ENCODE measurements at regions of chr14 and their contacts with region 1.

Region 1: GRCh38 chr14:106141242-106142220 is 615.1 kb downstream of the TMEM121 start:
- DNase-seq: peak; percentile 55
- H3K4me3 Mint-ChIP-seq: no peak overlapping the region
- H3K27ac Mint-ChIP-seq: no peak overlapping the region
- H3K4me1 Mint-ChIP-seq: peaks cover 11% of the 10 kb centered on the region
- H3K27me3 Mint-ChIP-seq: peaks cover 24% of the 10 kb centered on the region

Region 2: GRCh38 chr14:106044949-106045600 is 96.5 kb before region 1 on chr14:
- CTCF ChIA-PET with region 1: no interaction called
- DNase-seq: peak; percentile 91
- H3K4me3 Mint-ChIP-seq: no peak overlapping the region
- H3K27ac Mint-ChIP-seq: no peak overlapping the region
- H3K4me1 Mint-ChIP-seq: no peaks in the 10 kb centered on the region
- H3K27me3 Mint-ChIP-seq: peaks cover 16% of the 10 kb centered on the region

Region 3: GRCh38 chr14:106055289-106055688 is 86.2 kb before region 1 on chr14:
- CTCF ChIA-PET with region 1: no interaction called
- DNase-seq: no peak
- H3K4me3 Mint-ChIP-seq: no peak overlapping the region
- H3K27ac Mint-ChIP-seq: no peak overlapping the region
- H3K4me1 Mint-ChIP-seq: peaks cover 10% of the 10 kb centered on the region
- H3K27me3 Mint-ChIP-seq: peaks cover 38% of the 10 kb centered on the region

Region 4: DNA sequence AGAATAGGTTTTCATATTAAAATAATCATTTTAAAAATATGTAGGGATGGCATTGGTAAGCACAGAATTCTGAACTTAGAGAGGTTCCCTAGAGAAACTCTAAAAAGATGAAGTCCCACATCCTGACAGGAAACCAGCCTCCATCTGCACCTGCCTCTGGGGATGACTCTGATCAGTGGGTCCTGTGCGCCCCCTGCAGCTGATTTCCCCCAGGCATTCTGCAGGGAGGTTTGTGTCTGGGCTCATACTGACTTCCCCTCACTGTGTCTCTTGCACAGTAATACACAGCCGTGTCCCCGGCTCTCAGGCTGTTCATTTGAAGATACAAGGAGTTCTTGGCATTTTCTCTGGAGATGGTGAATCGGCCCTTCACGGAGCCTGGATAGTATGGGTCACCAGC is 12.3 kb before region 1 on chr14:
- CTCF ChIA-PET with region 1: interaction called, 15 read pairs
- DNase-seq: peak; percentile 65
- H3K4me3 Mint-ChIP-seq: no peak overlapping the region
- H3K27ac Mint-ChIP-seq: no peak overlapping the region
- H3K4me1 Mint-ChIP-seq: peaks cover 26% of the 10 kb centered on the region
- H3K27me3 Mint-ChIP-seq: peaks cover 17% of the 10 kb centered on the region

Region 5: DNA sequence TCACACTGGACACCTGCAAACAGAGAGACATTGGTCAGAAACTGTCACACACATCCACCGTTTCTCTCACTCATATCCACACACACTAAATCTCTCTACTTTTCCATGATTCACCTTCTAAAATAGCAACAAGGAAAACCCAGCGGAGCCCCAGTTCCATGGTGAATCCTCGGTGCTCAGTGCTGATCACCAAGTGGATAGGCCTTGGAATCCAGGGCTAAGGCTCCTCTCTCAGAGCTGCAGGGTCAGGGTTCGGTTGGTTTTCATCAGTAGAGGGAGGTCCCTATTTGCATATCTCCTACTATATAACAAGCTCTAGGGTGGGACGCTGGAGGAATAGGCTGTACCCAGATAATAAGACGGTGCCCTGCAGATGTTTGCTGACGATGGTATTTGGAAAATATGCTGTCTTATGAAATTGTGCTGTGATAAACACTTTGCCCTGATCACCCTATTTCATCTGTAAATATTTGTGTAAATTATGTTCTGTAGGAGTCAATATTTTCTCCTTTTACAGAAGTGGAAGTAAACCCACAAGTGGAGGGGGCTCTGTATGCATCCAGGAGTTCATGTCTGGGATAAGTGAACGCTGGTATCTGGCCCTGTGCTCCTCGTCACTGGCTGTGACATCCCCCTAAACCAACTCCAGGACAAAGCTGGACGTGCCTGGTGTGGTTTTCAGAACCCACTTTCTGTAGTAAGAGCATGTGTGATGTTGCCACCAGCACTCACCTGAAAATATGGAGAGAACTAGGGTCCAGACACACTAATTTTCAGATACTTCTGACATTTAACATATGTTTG is 94.0 kb after region 1 on chr14:
- CTCF ChIA-PET with region 1: no interaction called
- DNase-seq: no peak
- H3K4me3 Mint-ChIP-seq: no peak overlapping the region
- H3K27ac Mint-ChIP-seq: no peak overlapping the region
- H3K4me1 Mint-ChIP-seq: peaks cover 22% of the 10 kb centered on the region
- H3K27me3 Mint-ChIP-seq: peaks cover 12% of the 10 kb centered on the region

Measured in activated naive CD4-positive, alpha-beta T cell treated with anti-CD3 and anti-CD28 coated beads, Interleukin-2, amount 10 ng/mL, durations not matched to agents 7 days and 5 days (primary cell).